Transverse colon (tissue), 4 donors: ENCODE measurements at regions of chr13 and their contacts with region 1.

Region 1: GRCh38 chr13:102548811-102549210 is 48.0 kb upstream of the TPP2 start:
- DNase-seq: no peak
- H3K4me3 ChIP-seq: no peak overlapping the region
- H3K27ac ChIP-seq: no peak overlapping the region
- H3K4me1 ChIP-seq: no peaks in the 10 kb centered on the region
- H3K27me3 ChIP-seq: no peaks in the 10 kb centered on the region
- CTCF ChIP-seq: no peak
- EP300 ChIP-seq: no peak
- POLR2A ChIP-seq: no peak

Region 2: GRCh38 chr13:102484329-102484728 is 64.5 kb before region 1 on chr13:
- in situ Hi-C with region 1: loop called in 1 of 4 experiments (anchors 10 kb)
- intact Hi-C with region 1: no loop called
- DNase-seq: no peak
- H3K4me3 ChIP-seq: no peak overlapping the region
- H3K27ac ChIP-seq: no peak overlapping the region
- H3K4me1 ChIP-seq: no peaks in the 10 kb centered on the region
- H3K27me3 ChIP-seq: no peaks in the 10 kb centered on the region
- CTCF ChIP-seq: no peak
- EP300 ChIP-seq: no peak
- POLR2A ChIP-seq: no peak

Region 3: GRCh38 chr13:102591988-102592781 is 43.4 kb after region 1 on chr13:
- in situ Hi-C with region 1: no loop called
- intact Hi-C with region 1: no loop called
- DNase-seq: peak; percentile 80
- H3K4me3 ChIP-seq: peak overlapping the region; percentile 24 to 67 (median 44)
- H3K27ac ChIP-seq: peak overlapping the region; percentile 73 to 86 (median 79)
- H3K4me1 ChIP-seq: peaks cover 0 to 28% (median 14%) of the 10 kb centered on the region in 4 donors
- H3K27me3 ChIP-seq: no peaks in the 10 kb centered on the region
- CTCF ChIP-seq: peak; percentile 50 to 68 (median 53)
- EP300 ChIP-seq: no peak
- POLR2A ChIP-seq: no peak